ENCODE measurements at regions of chr13 and their contacts with region 1.

Region 1: DNA sequence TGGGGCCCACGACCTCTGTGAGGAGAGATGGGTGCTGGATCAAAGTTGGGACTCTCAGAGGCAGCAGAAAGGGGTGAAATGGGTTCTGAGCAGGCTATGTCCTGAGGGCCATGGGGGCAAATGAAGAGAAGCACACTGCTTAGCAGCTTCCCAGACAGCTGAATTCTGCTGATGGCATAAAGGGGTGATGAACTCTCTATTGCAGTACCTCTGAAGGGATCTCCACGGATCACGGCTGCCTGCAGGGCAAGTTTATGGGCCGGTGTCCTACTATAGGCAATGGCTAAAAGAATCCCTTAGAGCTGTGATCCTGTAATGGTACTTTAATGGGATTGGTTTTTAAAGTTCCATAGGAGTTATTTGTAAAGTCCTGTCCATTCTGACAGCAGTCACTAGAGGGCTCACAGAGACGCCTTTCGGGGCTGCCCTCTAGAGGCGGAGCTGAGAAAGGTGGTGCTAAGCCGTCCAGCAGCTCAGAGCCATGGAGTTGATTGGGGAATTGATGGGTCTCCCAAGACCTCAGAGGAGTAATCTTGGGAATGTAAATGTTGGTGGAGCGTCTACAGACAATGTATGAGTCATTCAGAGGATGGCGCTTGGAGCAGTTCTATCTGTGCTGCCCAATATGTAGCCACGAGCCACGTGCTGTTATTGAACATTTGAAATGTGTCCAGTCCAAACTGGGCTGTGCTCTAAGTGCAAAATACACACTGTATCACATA is 287.3 kb downstream of the COG6 start:
- DNase-seq: peak; percentile 68
- H3K4me3 ChIP-seq: no peak overlapping the region
- H3K27ac ChIP-seq: no peak overlapping the region
- H3K4me1 ChIP-seq: peaks cover 8% of the 10 kb centered on the region
- H3K27me3 ChIP-seq: no peaks in the 10 kb centered on the region
- CTCF ChIP-seq: peak; percentile 100

Region 2: DNA sequence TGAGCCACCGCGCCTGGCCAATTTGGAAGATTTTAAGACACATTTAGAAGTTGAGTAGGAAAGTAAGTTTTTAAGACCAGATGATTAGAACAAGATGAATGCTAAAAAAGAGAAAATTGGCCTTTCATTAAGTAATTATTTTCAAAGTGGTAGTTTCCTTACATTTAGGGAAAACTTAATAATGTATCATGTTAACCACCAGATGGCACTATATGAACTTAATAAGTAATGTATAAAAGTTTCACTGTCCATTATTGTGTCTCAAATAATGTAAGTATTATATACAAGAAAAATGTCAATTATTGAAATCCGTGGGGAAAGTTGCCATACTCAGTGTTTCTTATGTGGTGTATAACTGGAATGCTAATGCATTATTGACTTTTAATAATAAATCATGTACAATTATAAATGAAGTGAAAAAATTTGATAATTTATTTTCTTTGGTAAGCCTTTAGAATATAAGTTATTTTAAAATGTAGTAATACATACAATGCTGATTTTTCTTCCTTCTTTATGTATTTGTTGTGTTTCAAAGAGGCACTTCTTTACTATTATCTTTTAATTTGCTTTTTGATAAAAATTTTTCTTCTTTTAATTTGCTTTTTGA is 258.1 kb before region 1 on chr13:
- CTCF ChIA-PET with region 1: no interaction called
- dilution Hi-C with region 1: no loop called
- in situ Hi-C with region 1: no loop called
- intact Hi-C with region 1: loop called (anchors 10 kb)
- DNase-seq: peak; percentile 16
- H3K4me3 ChIP-seq: no peak overlapping the region
- H3K27ac ChIP-seq: no peak overlapping the region
- H3K4me1 ChIP-seq: no peaks in the 10 kb centered on the region
- H3K27me3 ChIP-seq: no peaks in the 10 kb centered on the region
- CTCF ChIP-seq: peak; percentile 21 to 25

Region 3: GRCh38 chr13:39777527-39778061 is 165.1 kb before region 1 on chr13:
- CTCF ChIA-PET with region 1: no interaction called
- dilution Hi-C with region 1: no loop called
- in situ Hi-C with region 1: no loop called
- intact Hi-C with region 1: loop called (anchors 5 kb)
- DNase-seq: peak; percentile 92
- H3K4me3 ChIP-seq: no peak overlapping the region
- H3K27ac ChIP-seq: no peak overlapping the region
- H3K4me1 ChIP-seq: peaks cover 15% of the 10 kb centered on the region
- H3K27me3 ChIP-seq: no peaks in the 10 kb centered on the region
- CTCF ChIP-seq: peak; percentile 56 to 69

Region 4: DNA sequence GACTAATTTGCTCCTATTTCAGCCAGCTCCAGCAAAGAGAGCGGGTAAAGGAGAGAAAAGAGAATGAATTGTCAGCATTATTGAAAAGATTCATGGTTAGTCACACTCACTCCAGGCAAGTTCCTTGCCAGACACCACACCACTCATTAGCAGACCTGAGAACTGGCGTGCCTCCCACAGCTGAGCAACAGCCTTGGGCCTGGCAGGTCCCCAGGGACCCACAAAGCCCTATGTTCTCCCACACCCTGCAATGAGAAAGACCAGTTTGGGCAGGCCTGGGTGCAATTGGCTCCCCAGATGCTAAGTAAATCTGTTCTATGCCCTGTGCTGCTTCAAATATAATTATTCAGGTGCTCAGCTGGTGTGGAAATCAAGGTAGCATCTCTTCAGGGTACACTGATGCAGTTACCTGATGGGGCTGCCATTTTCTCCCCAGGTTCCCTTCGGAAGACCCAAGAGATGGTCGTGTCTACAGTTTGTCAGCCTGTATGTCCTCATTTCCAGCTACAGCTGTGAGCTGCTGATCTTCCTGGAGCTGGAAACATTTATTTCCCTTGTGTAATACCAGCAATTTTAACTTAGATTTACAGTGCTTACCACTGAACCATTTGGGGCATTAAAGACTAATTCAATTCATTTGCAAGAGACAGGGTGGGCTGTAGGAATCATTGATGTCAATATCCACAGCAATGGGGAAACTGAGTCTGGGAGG is 117.7 kb after region 1 on chr13:
- CTCF ChIA-PET with region 1: no interaction called
- dilution Hi-C with region 1: no loop called
- in situ Hi-C with region 1: no loop called
- intact Hi-C with region 1: loop called (anchors 2 kb)
- DNase-seq: peak; percentile 99
- H3K4me3 ChIP-seq: no peak overlapping the region
- H3K27ac ChIP-seq: peak overlapping the region; percentile 76
- H3K4me1 ChIP-seq: peaks cover 63% of the 10 kb centered on the region
- H3K27me3 ChIP-seq: no peaks in the 10 kb centered on the region
- CTCF ChIP-seq: no peak

Region 5: DNA sequence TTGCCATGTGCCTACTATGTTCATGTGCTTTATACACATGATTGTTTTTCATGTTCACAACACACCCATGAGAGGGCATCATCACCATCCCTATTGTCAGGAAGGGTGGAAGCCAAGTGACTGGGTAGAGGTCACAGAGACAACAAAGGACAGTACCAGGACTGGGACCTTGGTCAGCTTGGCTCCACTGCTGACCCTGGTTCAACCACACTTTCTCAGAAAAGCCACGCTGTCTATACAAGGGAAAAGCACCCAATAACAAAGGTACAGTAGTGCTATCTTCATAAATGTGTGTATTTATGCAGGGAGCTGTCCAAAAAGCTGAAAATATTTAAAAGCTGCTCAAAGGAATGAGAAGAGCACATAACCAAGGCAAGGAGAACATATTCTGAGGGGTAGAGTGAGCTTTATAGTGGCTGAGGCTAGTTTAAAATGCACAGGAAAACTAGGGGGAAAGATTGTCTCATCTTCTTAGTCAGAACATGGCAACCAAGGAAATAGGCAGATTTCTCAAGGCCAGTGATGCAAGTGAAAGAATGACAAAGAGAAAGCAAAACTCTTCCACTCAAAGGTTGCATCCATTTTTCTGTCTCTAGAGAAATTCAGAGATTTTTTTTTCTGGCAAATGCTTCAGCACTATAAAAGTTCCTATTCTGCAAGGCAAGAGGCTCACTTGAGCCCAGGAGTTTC is 308.8 kb after region 1 on chr13:
- CTCF ChIA-PET with region 1: no interaction called
- dilution Hi-C with region 1: no loop called
- in situ Hi-C with region 1: no loop called
- intact Hi-C with region 1: loop called (anchors 10 kb)
- DNase-seq: peak; percentile 60
- H3K4me3 ChIP-seq: no peak overlapping the region
- H3K27ac ChIP-seq: no peak overlapping the region
- H3K4me1 ChIP-seq: peaks cover 19% of the 10 kb centered on the region
- H3K27me3 ChIP-seq: no peaks in the 10 kb centered on the region
- CTCF ChIP-seq: no peak

Region 6: DNA sequence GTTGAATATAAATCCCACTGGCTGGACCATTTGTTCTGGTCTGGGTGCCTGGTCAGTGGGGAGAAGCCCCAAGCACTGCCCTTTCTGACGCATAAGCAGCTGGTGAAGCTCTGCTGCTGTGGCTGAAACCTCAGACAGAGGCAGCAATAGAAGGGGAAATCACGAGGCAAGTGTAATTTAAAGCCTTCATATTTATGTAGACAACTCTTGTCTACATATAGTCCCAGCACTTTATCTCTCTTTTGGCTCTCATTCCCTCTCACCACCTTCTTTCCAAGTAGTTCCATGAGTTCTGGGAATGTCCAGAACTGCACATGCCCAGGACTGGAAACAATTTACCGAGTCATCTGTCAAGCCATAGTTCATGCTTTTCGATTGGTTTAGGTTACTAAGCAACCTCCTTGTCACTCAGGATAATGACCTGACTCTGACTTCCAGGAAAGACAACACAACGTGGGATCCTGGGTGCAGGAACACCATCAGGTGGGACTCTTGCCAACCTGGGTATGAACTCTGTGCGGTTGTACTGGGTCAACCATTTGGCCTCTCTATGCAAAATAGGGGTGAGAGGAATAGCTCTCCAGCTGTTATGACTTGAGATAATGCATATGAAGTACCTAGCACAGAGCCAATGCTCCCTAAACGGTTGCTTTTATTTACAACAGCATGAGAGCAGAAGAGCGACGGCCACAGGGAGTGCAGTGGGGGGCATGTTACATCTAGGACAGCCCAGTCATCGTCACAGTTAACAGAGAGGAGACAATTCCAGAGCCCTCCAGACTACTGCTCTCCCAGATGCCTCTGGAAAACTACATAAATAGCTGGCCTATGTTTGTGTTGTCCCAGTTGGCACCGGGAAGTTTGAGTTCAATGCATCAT is 401.8 kb after region 1 on chr13:
- CTCF ChIA-PET with region 1: no interaction called
- dilution Hi-C with region 1: no loop called
- in situ Hi-C with region 1: no loop called
- intact Hi-C with region 1: loop called (anchors 2 kb)
- DNase-seq: no peak
- H3K4me3 ChIP-seq: no peak overlapping the region
- H3K27ac ChIP-seq: no peak overlapping the region
- H3K4me1 ChIP-seq: no peaks in the 10 kb centered on the region
- H3K27me3 ChIP-seq: no peaks in the 10 kb centered on the region
- CTCF ChIP-seq: no peak